ENCODE measurements at regions of chr3 and their contacts with region 1.

Region 1: DNA sequence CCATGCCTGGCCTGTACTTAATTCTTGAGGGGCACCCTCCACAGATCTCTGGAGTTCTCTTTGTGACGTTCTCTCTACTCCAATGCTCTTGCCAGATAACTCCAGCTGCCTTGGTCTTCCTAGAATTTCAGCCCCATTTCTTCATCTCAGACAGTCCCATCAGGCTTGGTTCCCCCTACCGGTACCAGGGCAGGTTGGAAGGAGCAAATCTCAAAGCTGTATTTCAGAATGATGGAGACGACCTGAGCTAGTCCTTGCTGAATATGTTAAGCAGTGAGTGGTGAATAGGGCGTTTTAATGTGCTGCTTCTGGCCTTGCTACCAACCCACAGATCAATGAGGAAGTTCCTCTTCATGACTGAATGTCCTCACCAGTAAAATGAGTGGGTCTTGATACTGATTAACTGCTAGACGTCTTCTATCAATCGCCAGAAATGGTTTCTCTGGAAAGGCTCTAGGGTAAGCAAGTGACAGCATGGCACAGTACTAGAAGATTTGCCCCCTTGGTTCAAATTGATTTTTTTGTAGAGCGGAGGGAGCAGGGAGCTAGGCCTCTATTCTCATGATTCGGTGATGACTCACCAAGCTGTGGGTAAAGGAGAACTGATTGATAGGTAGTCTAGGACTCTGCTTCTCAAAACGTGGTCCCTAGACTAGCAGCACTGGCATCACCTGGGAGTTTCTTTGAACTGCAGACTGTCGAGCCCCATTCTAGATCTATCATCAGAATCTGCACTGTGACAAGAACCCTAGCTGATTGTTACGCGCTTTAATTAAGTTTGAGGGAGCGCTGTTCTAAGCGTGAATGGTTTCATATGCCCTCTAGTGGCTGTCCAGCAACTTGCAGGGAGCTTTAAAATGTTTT is 67.8 kb downstream of the UBP1 start:
- DNase-seq: peak; percentile 58
- H3K4me3 ChIP-seq: no peak overlapping the region
- H3K27ac ChIP-seq: no peak overlapping the region
- H3K4me1 ChIP-seq: no peaks in the 10 kb centered on the region
- H3K27me3 ChIP-seq: no peaks in the 10 kb centered on the region
- CTCF ChIP-seq: peak; percentile 46 to 90 (median 84)
- POLR2A ChIP-seq: no peak

Region 2: DNA sequence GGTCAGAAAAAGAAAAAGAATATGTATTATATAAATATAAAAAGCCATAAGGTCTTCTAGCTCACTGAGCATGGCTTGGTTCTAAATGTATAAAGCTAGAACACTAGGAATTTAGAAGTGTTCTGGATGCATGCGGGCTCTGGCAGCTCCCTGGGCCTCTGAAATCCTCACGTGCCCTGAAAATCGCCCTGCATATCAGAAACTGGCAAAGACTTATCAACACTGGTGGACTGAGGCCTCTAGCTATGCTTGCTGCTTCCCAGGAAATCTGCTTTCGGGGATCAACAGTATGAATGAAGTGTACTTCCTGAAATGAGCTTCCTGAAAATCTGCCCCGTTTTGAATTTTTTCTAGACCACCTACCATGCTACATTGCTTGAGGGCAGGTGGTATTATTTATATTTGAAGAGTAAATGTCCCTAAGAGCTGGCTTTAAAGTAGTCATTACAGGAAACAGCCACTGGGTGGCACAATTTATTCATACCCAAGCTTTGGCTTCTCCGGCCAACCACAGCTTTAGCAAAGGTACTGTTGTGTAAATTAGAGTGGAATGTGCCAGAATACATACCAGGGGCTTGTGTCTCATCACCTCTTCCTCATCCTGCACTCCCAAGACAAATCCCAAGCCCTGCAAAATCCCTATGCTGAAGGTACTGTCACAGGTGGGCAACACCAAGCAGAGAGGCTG is 241.0 kb before region 1 on chr3:
- intact Hi-C with region 1: loop called (anchors 5 kb)
- DNase-seq: peak; percentile 74
- H3K4me3 ChIP-seq: no peak overlapping the region
- H3K27ac ChIP-seq: no peak overlapping the region
- H3K4me1 ChIP-seq: no peaks in the 10 kb centered on the region
- H3K27me3 ChIP-seq: no peaks in the 10 kb centered on the region
- CTCF ChIP-seq: peak; percentile 57 to 84 (median 76)
- POLR2A ChIP-seq: no peak

Region 3: GRCh38 chr3:33256249-33256648 is 116.2 kb before region 1 on chr3:
- intact Hi-C with region 1: no loop called
- DNase-seq: no peak
- H3K4me3 ChIP-seq: no peak overlapping the region
- H3K27ac ChIP-seq: no peak overlapping the region
- H3K4me1 ChIP-seq: no peaks in the 10 kb centered on the region
- H3K27me3 ChIP-seq: no peaks in the 10 kb centered on the region
- CTCF ChIP-seq: no peak
- POLR2A ChIP-seq: no peak

Region 4: DNA sequence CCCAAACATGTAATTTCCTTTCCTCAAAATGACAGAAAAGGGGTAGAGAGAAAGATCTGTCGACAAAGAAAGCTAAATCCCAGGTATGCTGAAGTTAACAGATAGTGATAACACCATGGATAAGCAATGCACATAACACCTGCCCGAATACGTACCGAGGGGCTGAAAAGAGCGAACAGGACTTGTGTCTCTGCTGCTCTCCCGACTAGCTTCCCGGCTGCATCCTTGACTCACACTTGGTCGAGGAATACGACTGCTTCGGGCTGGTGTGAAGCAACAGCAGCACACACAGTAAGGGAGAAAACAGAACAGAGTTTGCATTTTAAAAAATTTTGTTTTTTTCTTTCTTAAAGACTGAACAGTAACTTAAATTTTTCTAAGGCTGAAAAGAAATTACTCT is 209.2 kb after region 1 on chr3:
- intact Hi-C with region 1: no loop called
- DNase-seq: no peak
- H3K4me3 ChIP-seq: no peak overlapping the region
- H3K27ac ChIP-seq: no peak overlapping the region
- H3K4me1 ChIP-seq: no peaks in the 10 kb centered on the region
- H3K27me3 ChIP-seq: no peaks in the 10 kb centered on the region
- CTCF ChIP-seq: no peak
- POLR2A ChIP-seq: no peak

Measured in testis (tissue), 5 donors.